Activated CD4-positive, alpha-beta memory T cell treated with anti-CD3 and anti-CD28 coated beads for 36 hours (primary cell): ENCODE measurements at regions of chr7 and their contacts with region 1.

Region 1: DNA sequence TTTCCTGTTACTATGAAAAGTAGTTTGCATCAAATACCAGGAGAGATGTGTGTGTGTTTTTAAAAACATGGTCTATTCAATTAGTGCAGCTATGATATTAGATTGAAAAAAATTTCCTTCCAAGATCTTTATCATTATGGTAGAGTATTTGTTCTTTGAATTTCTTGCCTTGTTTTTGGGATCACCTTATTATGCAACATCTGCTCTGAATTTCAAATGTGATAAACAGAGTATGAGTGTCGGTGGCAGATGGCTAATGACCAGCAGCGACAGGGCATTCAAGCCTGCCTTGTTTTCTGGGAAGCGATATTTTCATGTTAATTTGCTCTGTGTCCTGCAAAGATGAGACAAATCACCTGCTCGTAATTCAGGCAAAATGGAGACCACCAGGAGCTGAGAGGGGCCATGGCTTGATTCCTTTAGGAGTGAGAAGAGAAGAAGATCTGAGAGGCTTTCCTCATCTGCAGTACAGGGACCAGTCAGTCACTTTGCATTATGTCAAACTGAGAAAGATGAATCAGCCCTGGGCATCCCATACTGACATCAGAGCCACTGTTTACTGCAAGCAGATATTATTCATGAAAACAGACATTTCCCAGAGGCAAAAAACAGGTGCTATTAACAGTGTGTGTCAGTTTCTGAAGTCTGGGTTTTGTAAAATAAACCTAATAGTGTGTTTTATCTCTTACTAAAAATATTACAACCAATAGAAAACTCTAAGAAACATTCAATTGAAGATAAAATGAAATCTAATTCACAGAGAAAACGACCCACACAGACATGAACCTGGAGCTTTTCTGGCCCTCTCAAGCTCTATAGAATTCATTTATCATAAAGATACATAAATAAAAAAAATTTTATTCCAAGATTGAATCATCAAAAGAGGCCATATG is 67.6 kb downstream of the CDK6 start:
- DNase-seq: peak; percentile 64
- H3K4me3 Mint-ChIP-seq: peak overlapping the region; percentile 48
- H3K27ac Mint-ChIP-seq: peak overlapping the region; percentile 83
- H3K4me1 Mint-ChIP-seq: peaks cover 72% of the 10 kb centered on the region
- H3K27me3 Mint-ChIP-seq: no peaks in the 10 kb centered on the region

Region 2: GRCh38 chr7:92691578-92691977 is 77.2 kb before region 1 on chr7:
- CTCF ChIA-PET with region 1: no interaction called
- POLR2A ChIA-PET with region 1: no interaction called
- intact Hi-C with region 1: loop called (anchors 5 kb)
- DNase-seq: no peak
- H3K4me3 Mint-ChIP-seq: no peak overlapping the region
- H3K27ac Mint-ChIP-seq: peak overlapping the region; percentile 83
- H3K4me1 Mint-ChIP-seq: peaks cover 60% of the 10 kb centered on the region
- H3K27me3 Mint-ChIP-seq: no peaks in the 10 kb centered on the region

Region 3: DNA sequence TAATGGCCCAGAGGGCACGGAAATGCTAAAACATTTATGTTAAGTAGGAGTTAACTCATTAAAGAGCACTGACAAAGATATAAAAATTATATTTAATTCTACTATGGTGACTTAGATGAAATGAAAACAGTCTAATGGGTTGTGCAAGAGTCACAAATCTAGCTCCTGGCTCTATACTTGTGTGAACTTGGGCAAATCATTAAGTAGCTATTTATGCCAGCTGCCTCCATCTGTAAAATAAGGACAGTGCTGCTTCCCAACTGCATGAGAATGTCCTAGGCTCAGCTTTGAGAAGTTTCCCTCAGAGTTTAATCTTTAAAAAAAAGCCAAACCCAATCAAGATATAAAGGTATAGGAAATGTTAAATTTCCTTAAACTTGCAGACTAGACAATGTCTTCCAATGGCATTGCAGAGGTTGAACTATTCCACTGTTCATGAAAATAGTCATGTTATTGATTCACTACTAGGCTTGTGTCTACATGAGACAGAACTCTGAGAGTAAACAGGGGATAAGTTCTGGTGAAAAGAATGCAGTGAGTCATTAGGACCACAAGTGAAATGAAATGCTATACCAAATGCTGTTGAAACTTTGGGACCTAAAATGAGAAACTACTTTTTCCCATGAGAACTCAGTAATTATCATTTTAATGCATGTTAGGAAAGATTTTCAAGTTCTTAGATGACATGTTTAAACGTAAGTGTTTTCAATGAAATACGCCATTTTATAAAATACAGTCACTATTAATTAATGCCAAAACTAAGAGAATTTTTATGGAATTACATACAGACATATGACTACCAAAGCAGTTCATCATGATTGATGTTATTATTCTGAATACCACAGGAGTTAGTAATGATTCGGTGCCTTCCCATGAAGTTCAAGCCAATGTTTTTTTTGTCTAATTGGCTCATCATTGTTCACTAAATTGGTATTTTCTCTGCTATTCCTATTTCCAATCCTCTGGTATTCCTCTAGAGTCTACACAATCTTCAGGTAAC is 16.5 kb before region 1 on chr7:
- CTCF ChIA-PET with region 1: no interaction called
- POLR2A ChIA-PET with region 1: interaction called, 4 read pairs
- intact Hi-C with region 1: loop called (anchors 1 kb)
- DNase-seq: no peak
- H3K4me3 Mint-ChIP-seq: no peak overlapping the region
- H3K27ac Mint-ChIP-seq: peak overlapping the region; percentile 72
- H3K4me1 Mint-ChIP-seq: peaks cover 63% of the 10 kb centered on the region
- H3K27me3 Mint-ChIP-seq: no peaks in the 10 kb centered on the region

Region 4: DNA sequence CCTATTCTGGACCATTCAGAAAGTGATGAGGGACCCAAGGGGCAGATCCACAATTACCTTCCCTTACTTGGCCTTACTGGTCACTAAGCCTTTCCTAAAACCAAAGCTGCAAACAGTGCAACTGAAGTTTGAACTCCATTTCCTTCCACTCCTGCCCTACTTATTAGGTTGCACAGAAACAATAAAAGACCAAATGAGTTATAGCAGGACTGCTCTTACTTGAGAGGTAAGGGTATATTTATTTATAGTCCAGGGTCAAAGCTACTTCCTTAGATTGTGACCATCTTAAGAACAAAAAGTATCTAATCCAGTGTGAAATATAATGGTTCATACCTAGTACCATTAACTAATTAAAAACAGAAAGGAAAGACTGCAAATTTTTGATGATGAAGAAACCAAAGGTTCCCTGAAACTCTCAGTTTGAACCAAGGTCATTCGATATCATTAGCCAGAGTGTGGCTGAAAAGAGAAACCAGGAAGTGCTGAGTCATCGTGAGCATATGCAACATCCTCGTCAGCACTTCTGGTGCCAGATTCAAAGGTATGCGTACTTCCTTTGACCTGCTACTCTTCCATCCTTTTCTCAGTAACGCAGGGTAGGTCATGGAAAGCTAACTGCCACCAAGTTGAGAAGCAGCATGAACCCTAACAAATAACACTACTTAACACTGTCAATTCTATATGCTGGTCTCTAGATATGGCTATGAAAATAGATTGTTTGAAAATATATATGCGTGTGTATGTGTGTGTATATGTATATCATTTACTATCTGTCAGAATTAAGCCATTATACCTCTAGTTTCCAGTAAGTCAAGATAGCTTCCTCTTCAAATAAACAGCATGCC is 40.9 kb after region 1 on chr7:
- CTCF ChIA-PET with region 1: no interaction called
- POLR2A ChIA-PET with region 1: interaction called, 6 read pairs
- intact Hi-C with region 1: loop called (anchors 1 kb)
- DNase-seq: peak; percentile 83
- H3K4me3 Mint-ChIP-seq: peak overlapping the region; percentile 39
- H3K27ac Mint-ChIP-seq: peak overlapping the region; percentile 89
- H3K4me1 Mint-ChIP-seq: peaks cover 73% of the 10 kb centered on the region
- H3K27me3 Mint-ChIP-seq: no peaks in the 10 kb centered on the region

Region 5: DNA sequence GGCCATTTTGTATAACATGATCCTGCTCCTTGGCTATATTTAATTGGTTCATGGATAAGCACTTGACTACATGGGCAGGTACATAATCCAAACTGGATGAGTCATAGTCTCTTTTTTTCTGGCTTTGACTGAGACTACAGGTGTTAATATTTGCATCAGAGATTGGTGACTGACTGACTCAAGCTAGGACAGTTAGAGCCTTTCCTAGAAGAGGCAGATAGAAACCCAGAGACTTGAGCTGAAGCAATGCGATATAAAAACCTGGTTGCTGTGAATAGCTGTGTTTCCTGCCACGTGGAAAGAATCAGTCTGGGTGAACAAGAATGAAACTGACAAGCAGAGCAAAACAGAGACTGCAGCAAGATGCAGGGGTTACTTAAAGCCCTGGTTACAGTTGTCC is 268.1 kb after region 1 on chr7:
- CTCF ChIA-PET with region 1: no interaction called
- POLR2A ChIA-PET with region 1: no interaction called
- intact Hi-C with region 1: loop called (anchors 2 kb)
- DNase-seq: peak; percentile 64
- H3K4me3 Mint-ChIP-seq: no peak overlapping the region
- H3K27ac Mint-ChIP-seq: peak overlapping the region; percentile 53
- H3K4me1 Mint-ChIP-seq: peaks cover 22% of the 10 kb centered on the region
- H3K27me3 Mint-ChIP-seq: no peaks in the 10 kb centered on the region